Mammary epithelial cell (primary cell): ENCODE measurements at regions of chr1 and their contacts with region 1.

Region 1: GRCh38 chr1:92784639-92785500 is at the start of gene EVI5:
- DNase-seq: peak; percentile 95
- H3K4me3 ChIP-seq: peak within 1 kb of the TSS; percentile 76 to 98 (median 83)
- H3K27ac ChIP-seq: peak within 1 kb of the TSS; percentile 66
- H3K4me1 ChIP-seq: peaks cover 13% of the 10 kb centered on the region
- H3K27me3 ChIP-seq: no peaks in the 10 kb centered on the region
- CTCF ChIP-seq: no peak
- total RNA-seq, gene EVI5: 30.3 to 43.3 TPM

Region 2: GRCh38 chr1:92329347-92330129 is 455.3 kb before region 1 on chr1:
- CTCF ChIA-PET with region 1: no interaction called
- dilution Hi-C with region 1: no loop called
- in situ Hi-C with region 1: no loop called
- intact Hi-C with region 1: no loop called
- DNase-seq: peak; percentile 95
- H3K4me3 ChIP-seq: no peak overlapping the region
- H3K27ac ChIP-seq: peak overlapping the region; percentile 70
- H3K4me1 ChIP-seq: peaks cover 38% of the 10 kb centered on the region
- H3K27me3 ChIP-seq: no peaks in the 10 kb centered on the region
- CTCF ChIP-seq: peak in 1 of 2 donors; percentile 19

Region 3: GRCh38 chr1:92749024-92749634 is 35.7 kb before region 1 on chr1:
- CTCF ChIA-PET with region 1: interaction called, 12 read pairs
- dilution Hi-C with region 1: no loop called
- in situ Hi-C with region 1: no loop called
- intact Hi-C with region 1: loop called (anchors 1 kb)
- DNase-seq: peak; percentile 54
- H3K4me3 ChIP-seq: no peak overlapping the region
- H3K27ac ChIP-seq: no peak overlapping the region
- H3K4me1 ChIP-seq: peaks cover 18% of the 10 kb centered on the region
- H3K27me3 ChIP-seq: no peaks in the 10 kb centered on the region
- CTCF ChIP-seq: peak; percentile 80 to 91

Region 4: GRCh38 chr1:92804721-92805169 is 19.9 kb after region 1 on chr1:
- CTCF ChIA-PET with region 1: no interaction called
- dilution Hi-C with region 1: no loop called
- in situ Hi-C with region 1: no loop called
- intact Hi-C with region 1: loop called (anchors 2 kb)
- DNase-seq: peak; percentile 92
- H3K4me3 ChIP-seq: no peak overlapping the region
- H3K27ac ChIP-seq: peak overlapping the region; percentile 74
- H3K4me1 ChIP-seq: peaks cover 25% of the 10 kb centered on the region
- H3K27me3 ChIP-seq: no peaks in the 10 kb centered on the region
- CTCF ChIP-seq: no peak

Region 5: DNA sequence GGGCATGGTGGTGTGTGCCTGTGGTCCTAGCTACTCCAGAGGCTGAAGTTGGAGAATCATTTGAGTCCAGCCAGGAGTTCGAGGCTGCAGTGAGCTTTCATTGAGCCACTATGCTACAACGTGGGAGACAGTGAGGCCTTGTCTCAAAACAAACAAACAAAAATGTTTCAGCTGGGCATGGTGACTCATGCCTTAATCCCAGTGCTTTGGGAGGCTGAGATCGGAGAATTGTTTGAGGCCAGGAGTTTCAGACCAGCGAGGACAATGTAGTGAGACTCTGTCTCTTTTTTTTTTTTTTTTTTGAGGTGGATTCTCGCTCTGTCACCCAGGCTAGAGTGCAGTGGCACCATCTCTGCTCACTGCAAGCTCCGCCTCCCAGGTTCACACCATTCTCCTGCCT is 41.9 kb after region 1 on chr1:
- CTCF ChIA-PET with region 1: no interaction called
- dilution Hi-C with region 1: no loop called
- in situ Hi-C with region 1: no loop called
- intact Hi-C with region 1: loop called (anchors 2 kb)
- DNase-seq: no peak
- H3K4me3 ChIP-seq: no peak overlapping the region
- H3K27ac ChIP-seq: no peak overlapping the region
- H3K4me1 ChIP-seq: no peaks in the 10 kb centered on the region
- H3K27me3 ChIP-seq: no peaks in the 10 kb centered on the region
- CTCF ChIP-seq: no peak

Region 6: DNA sequence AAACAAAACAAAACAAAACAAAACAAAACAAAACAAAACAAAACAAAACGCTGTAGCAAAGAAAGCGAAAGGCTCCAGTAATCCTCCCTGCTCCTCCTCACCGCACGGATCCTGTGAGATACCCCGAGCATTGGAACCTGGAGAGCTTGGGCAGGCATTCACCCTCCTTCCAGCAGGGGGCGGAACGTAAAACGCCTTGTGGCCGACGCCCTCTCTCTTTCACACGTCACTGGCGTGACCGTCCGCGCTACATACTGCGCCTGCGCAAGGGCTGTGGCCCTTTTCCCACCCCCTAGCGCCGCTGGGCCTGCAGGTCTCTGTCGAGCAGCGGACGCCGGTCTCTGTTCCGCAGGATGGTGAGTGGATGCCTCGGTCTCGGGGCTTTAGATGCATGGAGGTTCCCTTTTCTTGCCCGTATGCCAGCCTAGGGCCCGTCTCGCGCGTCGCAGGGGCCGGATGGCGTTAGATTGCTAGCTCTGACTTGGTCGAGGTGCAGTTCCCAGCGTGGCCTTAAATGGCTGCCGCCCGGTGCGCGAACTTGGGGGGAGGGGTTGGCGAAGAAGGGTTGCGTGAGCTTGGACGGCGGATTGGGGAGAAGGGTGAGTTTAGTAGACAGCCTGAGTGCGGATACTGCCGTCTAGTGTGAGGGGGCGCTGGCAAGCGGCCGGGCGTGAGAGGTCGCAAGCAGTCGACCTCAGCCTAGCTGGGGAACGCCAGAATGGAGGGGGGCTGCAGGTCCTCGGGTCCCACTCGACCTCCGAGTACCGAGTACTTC is 47.1 kb after region 1 on chr1 and contains the start of gene RPL5:
- CTCF ChIA-PET with region 1: no interaction called
- dilution Hi-C with region 1: no loop called
- in situ Hi-C with region 1: no loop called
- intact Hi-C with region 1: loop called (anchors 1 kb)
- DNase-seq: peak; percentile 96
- H3K4me3 ChIP-seq: peak within 1 kb of the TSS; percentile 83 to 93 (median 90)
- H3K27ac ChIP-seq: peak within 1 kb of the TSS; percentile 85
- H3K4me1 ChIP-seq: peaks cover 26% of the 10 kb centered on the region
- H3K27me3 ChIP-seq: no peaks in the 10 kb centered on the region
- CTCF ChIP-seq: peak; percentile 97
- total RNA-seq, gene RPL5: 1,045 to 1,097 TPM